Thyroid gland (tissue), 4 donors: ENCODE measurements at regions of chr6 and their contacts with region 1.

Region 1: DNA sequence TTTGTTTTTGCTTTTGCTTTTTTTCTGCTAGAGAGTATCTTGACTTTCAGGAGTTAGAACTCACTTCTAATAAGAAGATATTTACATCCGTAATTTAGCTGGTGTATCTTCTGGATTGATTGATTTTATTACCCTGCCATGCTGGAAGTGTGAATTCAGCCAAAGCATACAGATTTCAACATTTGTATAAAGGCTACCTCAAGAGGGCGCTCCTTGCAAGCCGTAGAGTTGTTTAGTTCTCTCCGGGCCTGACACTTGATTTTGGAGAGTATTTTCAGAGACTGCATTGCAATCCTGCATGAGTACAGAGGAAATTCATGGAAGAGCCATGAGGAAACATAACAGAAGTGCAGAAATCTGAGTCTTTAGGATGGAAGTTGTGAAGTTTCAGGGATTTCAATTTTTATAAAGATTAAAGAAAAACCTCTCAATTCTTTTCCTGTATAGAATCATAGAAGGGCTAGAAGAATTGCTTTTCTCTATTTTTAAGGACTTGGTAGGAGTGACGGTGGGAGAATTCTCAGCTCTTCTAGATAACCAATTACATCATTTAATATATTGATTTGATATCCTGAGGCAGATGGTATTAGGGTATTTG is 66.7 kb upstream of the TIAM2 start:
- DNase-seq: peak; percentile 66 to 71
- H3K4me3 ChIP-seq: no peak overlapping the region
- H3K27ac ChIP-seq: no peak overlapping the region
- H3K4me1 ChIP-seq: peaks cover 5 to 12% of the 10 kb centered on the region in 2 donors
- H3K27me3 ChIP-seq: no peaks in the 10 kb centered on the region
- CTCF ChIP-seq: peak; percentile 62 to 91 (median 79)
- POLR2A ChIP-seq: no peak

Region 2: DNA sequence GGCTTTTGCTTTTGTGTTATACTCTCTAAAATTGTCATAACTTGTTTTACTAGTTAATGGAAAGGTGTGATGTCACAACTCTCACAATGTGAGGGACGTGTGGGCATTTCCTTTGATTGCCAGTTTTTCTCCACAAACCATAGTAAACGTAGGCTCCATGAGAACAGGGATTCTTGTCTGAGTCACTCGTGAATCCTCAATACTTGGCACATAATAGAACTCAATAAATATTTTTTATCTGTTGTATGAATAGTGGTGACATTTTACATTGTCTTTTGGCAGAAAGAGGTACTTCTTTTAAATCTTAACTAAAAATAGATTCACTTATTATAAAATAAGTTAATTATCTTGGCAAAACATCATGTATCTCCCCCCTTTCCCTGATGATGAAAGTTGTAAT is 348.9 kb before region 1 on chr6:
- intact Hi-C with region 1: no loop called
- DNase-seq: no peak
- H3K4me3 ChIP-seq: no peak overlapping the region
- H3K27ac ChIP-seq: no peak overlapping the region
- H3K4me1 ChIP-seq: no peaks in the 10 kb centered on the region
- H3K27me3 ChIP-seq: no peaks in the 10 kb centered on the region
- CTCF ChIP-seq: no peak
- POLR2A ChIP-seq: no peak

Region 3: DNA sequence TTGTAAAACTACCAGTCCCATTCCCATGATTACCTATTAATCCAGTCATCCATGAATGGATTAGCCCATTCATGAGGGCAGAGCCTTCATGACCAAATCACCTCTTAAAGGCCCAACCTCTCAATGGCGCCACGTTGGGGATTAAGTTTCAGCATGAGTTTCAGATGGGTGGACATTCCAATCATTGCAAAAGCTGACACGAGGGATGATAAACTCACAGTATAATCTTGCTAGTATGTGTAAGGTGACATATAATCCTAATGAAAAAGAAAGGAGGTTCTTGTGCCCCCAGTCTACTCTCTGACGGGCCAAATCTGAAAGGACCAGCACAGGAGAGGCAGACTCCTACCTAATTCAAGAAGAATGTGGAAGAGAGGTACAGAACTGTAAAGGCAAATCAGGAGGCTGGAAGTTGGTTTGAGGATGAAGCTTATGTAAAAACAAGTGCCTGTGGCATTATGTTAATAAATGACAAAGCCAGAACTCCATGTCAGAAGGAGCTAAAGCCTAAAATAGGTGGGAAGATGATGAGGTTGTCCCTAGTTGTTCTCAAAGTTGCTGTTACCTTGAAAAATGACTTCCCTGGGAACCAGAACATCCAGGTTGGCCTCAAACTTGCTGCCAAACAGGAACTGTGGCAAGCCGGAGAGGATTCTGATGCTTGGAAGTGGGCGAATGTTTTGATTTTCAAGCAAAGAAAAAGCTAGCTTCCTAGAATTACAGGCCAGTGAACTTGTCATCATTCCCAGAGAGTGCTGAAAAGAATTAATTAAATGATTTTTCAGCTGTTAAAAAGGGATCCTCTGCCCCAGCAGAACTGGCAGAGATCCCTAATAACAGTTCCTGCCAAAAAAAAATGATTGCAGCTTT is 39.8 kb before region 1 on chr6:
- intact Hi-C with region 1: no loop called
- DNase-seq: no peak
- H3K4me3 ChIP-seq: no peak overlapping the region
- H3K27ac ChIP-seq: no peak overlapping the region
- H3K4me1 ChIP-seq: peaks cover 8 to 18% of the 10 kb centered on the region in 2 donors
- H3K27me3 ChIP-seq: no peaks in the 10 kb centered on the region
- CTCF ChIP-seq: no peak
- POLR2A ChIP-seq: no peak

Region 4: DNA sequence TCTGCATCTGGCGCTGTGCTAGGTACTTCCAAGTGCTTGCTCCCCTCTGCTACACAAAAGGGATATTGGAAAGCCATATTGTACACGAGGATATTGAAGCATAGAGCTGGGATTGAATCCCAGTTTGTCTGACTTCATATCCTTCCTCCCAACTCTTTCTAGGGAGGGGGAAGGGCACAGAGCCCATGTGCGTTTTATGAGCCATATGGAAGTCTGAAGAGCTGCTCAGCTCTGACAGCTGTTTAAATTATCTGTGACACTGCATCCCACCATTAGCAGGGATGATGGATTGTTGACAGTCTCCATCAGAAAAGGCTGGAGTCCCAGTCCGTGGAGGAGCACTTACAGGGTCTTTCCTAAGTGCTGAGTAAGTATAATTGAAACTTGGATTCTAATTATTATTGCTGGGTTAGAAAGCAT is 85.0 kb after region 1 on chr6:
- intact Hi-C with region 1: no loop called
- DNase-seq: no peak
- H3K4me3 ChIP-seq: no peak overlapping the region
- H3K27ac ChIP-seq: no peak overlapping the region
- H3K4me1 ChIP-seq: no peaks in the 10 kb centered on the region
- H3K27me3 ChIP-seq: no peaks in the 10 kb centered on the region
- CTCF ChIP-seq: no peak
- POLR2A ChIP-seq: no peak

Region 5: GRCh38 chr6:155253337-155253736 is 324.9 kb after region 1 on chr6:
- intact Hi-C with region 1: loop called (anchors 10 kb)
- DNase-seq: peak; percentile 71 to 72
- H3K4me3 ChIP-seq: no peak overlapping the region
- H3K27ac ChIP-seq: peak overlapping the region; percentile 78 to 98 (median 83)
- H3K4me1 ChIP-seq: peaks cover 6 to 25% of the 10 kb centered on the region in 2 donors
- H3K27me3 ChIP-seq: no peaks in the 10 kb centered on the region
- CTCF ChIP-seq: no peak
- POLR2A ChIP-seq: peak in 1 of 2 donors; percentile 46